WTC11 (cell line): ENCODE measurements at regions of chr1 and their contacts with region 1.

Region 1: DNA sequence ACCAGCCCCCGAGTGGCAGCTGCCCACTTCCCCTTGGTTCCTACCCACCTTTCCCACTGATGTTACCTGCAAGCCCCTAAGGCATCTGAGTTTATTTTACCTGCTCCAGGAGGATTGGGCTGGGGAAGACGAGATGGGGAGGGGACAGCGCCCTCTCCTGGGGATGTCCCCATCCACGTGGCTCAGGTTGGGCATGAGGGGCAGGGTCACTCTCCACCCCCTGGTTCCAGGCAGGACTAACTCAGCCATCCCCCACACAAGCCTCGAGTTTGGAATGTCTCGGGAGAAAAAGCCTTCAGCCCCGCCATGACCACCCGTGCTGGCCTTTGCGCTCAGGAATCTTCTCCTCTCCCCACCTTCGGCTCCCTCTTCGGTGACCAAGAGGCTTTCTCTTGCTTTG is 90.0 kb downstream of the ARHGEF10L start:
- DNase-seq: peak; percentile 83
- ATAC-seq: peak; percentile 90
- H3K4me3 Mint-ChIP-seq: no peak overlapping the region
- H3K27ac Mint-ChIP-seq: peak overlapping the region; percentile 87
- H3K4me1 Mint-ChIP-seq: peaks cover 9% of the 10 kb centered on the region; the same call in 1 of the 2 replicates
- H3K27me3 Mint-ChIP-seq: no peaks in the 10 kb centered on the region
- CTCF ChIP-seq: peak; percentile 66; the same call in 1 of the 2 replicates

Region 2: DNA sequence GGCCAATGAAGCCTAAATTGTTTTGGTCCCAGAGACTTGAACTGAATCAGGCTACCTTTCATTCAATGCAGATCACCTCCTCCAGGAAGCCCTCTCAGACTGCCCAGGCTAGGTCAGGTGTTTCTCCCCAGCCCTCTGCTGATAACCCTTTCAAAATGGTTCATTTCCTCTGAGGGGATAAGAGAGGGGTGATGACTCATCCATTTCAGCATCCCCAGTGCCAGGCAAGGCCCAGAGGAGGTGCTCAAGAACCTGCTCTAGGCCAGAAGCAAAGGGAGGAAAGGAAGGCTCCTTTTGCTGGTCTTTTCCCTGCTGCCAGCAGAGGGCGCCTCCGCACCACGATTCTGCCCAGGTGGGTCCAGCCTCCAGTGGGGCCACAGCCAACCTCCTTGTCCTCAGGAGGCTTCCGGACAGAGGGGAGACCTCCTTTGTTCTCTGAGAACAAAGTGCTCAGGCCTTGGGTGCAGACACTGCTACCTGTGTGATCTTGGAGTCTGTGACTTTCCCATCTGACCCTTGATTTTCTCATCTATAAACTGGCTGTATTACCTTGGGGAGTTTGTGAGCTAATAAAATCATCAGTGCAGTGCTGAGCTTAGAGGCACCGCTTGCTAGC is 135.2 kb before region 1 on chr1:
- CTCF ChIA-PET with region 1: interaction called, 13 read pairs
- POLR2A ChIA-PET with region 1: no interaction called
- DNase-seq: peak; percentile 91
- ATAC-seq: peak; percentile 97
- H3K4me3 Mint-ChIP-seq: no peak overlapping the region
- H3K27ac Mint-ChIP-seq: peak overlapping the region; percentile 40; the same call in 1 of the 2 replicates
- H3K4me1 Mint-ChIP-seq: peaks cover 23% of the 10 kb centered on the region
- H3K27me3 Mint-ChIP-seq: no peaks in the 10 kb centered on the region
- CTCF ChIP-seq: peak; percentile 97